Mammary epithelial cell (primary cell): ENCODE measurements at regions of chr17 and their contacts with region 1.

Region 1: DNA sequence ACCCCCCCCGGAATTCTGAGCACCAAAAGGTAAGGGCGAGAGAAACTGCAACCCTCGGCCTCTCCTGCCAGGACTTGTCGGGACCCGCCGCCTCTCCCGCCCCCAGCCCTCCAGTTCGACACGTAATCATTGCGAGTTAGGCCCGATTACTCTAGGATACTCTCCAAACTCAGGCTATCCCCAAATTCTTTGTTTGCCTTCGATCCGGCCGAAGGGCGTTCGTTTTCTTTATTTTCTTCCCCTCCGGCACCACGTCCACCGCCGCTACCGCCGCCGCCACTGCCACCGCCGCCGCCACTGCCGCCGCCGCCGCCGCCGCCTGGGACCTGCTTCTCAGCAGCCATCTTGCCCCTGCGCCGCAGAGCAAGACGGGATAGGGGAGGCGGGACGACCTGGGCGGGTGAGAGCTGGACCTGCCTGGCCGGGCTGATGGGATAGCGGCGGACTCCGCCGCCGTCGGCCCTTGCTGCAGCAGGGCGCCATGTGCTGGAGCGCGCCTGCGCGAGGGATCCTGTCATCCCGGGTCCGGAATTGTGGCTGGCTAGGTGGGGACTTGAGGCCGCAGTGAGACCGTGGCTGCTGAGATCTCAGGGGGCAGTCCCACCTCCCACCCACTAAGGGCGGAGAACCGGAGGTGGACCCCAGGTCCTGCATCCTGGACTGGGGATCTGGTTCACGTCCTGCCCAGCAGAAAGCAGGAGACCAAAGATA is at the start of gene SRP68:
- DNase-seq: peak; percentile 93
- H3K4me3 ChIP-seq: peak within 1 kb of the TSS; percentile 62 to 97 (median 86)
- H3K27ac ChIP-seq: peak within 1 kb of the TSS; percentile 87
- H3K4me1 ChIP-seq: peaks cover 37% of the 10 kb centered on the region
- H3K27me3 ChIP-seq: peaks cover 36% of the 10 kb centered on the region
- CTCF ChIP-seq: no peak
- total RNA-seq, gene SRP68: 24.5 to 102 TPM

Region 2: DNA sequence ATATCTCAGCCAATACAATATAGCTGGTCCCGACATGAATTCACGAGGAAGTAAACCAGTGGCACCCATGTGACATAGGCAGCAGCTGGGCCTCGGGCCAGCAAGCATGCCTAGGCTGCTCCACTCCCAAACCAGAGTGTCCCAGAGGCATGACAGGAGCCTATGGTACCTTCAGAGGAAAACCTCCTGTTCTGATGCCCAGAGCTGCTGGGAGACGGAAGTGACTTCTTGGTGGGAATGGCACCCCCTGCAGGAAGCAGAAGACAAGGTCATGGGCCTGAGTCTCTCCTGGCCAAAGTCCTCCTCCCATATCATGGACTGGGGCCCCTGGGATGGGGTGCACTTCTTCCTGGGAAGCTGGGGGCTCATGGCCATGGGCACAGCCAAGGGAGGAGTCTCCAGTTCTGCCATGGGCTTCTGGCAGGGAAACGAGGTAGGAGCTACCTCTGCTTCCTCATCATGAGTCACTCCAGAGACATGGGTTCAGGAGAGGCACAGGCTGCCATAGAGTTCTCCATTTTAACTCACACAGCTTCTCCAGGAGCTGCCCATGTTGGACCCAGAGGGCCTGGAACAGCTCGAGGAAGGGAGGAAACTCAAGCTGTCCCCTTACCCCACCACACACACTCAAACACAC is 144.9 kb before region 1 on chr17:
- CTCF ChIA-PET with region 1: no interaction called
- dilution Hi-C with region 1: loop called (anchors 5 kb)
- in situ Hi-C with region 1: no loop called
- intact Hi-C with region 1: no loop called
- DNase-seq: peak; percentile 9
- H3K4me3 ChIP-seq: no peak overlapping the region
- H3K27ac ChIP-seq: no peak overlapping the region
- H3K4me1 ChIP-seq: peaks cover 9% of the 10 kb centered on the region
- H3K27me3 ChIP-seq: no peaks in the 10 kb centered on the region
- CTCF ChIP-seq: peak in 1 of 2 donors; percentile 47

Region 3: DNA sequence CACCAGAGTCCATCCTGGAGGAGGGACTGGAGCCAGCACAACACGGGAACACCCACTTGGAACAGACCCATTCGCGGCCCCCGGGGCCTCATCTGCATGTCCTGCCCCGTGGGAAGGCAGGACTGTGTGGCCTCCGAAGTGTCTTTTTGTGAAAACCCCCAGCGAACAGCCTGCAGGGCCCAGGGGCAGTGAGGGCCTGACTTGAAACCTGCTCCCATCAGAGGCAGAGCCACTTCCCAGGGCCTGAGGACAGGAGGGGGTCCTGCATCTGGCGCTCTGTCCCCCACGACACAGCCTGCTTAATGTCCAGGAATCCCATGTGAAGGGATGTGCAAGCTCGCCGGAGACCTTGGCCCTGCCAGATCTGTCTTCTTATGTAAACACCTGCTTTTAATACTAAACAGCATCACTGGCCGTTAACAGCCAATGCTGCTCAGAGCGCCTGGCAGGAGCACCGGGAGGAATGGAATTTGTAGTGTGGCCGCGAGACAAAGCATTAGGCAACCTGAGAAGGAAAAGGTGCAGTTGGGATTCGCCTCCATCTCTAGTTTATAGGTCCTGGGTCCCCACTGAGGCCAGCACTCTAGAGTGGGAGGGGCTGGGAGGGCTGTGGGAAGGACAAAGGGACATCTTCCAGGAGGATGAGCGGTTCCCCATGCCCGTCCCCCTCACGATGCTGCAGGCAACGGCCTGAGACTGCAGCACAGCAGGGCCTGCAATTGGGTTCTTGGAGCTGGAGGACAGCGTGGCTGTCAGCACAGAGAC is 35.6 kb before region 1 on chr17:
- CTCF ChIA-PET with region 1: no interaction called
- dilution Hi-C with region 1: loop called (anchors 5 kb)
- in situ Hi-C with region 1: no loop called
- intact Hi-C with region 1: no loop called
- DNase-seq: no peak
- H3K4me3 ChIP-seq: no peak overlapping the region
- H3K27ac ChIP-seq: no peak overlapping the region
- H3K4me1 ChIP-seq: no peaks in the 10 kb centered on the region
- H3K27me3 ChIP-seq: no peaks in the 10 kb centered on the region
- CTCF ChIP-seq: no peak

Region 4: GRCh38 chr17:76053246-76054116 is 18.8 kb before region 1 on chr17:
- CTCF ChIA-PET with region 1: no interaction called
- dilution Hi-C with region 1: no loop called
- in situ Hi-C with region 1: no loop called
- intact Hi-C with region 1: no loop called
- DNase-seq: peak; percentile 44
- H3K4me3 ChIP-seq: no peak overlapping the region
- H3K27ac ChIP-seq: peak overlapping the region; percentile 35
- H3K4me1 ChIP-seq: peaks cover 17% of the 10 kb centered on the region
- H3K27me3 ChIP-seq: no peaks in the 10 kb centered on the region
- CTCF ChIP-seq: no peak

Region 5: GRCh38 chr17:76153640-76154039 is 81.3 kb after region 1 on chr17:
- CTCF ChIA-PET with region 1: no interaction called
- dilution Hi-C with region 1: loop called (anchors 5 kb)
- in situ Hi-C with region 1: no loop called
- intact Hi-C with region 1: no loop called
- DNase-seq: no peak
- H3K4me3 ChIP-seq: no peak overlapping the region
- H3K27ac ChIP-seq: no peak overlapping the region
- H3K4me1 ChIP-seq: no peaks in the 10 kb centered on the region
- H3K27me3 ChIP-seq: peaks cover 2% of the 10 kb centered on the region
- CTCF ChIP-seq: peak in 1 of 2 donors; percentile 29